ENCODE measurements at regions of chr14 and their contacts with region 1.

Region 1: DNA sequence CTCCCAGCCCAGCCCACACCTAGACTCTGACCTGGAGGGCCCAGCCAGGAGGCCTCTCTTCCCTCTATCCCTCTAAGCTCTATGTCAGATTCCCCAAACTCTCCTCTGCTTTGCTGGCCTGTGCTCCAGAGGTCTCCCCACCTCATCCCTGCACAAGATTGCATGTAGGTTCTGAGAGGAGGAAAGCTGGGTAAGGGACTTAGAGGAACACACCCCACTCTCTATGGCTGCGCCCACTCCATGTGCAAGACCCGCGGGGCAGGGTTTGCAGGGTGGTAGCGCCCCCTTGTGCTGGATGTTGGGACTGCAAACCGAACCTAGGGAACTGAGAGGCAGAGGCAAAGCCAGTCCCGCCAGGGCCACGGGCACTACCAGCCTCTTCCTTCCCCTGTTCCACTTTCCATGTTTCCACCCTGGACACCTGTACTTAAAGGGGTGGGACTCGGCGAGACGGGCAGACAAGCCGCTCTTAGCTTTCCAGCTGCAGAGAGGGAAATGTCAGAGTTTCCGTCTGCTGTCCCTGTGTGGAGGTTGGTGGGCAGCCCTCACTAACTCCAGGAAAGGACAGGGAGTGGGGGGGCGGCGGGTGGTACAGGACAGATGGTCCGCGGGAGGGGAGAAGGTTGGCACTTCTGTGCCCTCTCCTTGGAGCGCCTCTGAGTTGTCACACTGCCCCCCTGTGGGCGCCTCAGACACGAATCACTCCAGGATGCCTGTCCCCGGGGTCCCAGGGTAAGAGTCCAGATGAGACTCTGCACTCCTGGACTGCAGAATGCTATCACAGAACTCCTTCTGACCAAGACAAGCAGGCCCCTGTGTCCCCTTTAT is 16.8 kb downstream of the MMP14 start:
- DNase-seq: peak; percentile 81 to 86 (median 83)
- H3K4me3 ChIP-seq: peak overlapping the region; percentile 72 to 77
- H3K4me3 Mint-ChIP-seq: peak overlapping the region; percentile 84 to 89 (median 86)
- H3K27ac ChIP-seq: peak overlapping the region; percentile 34
- H3K27ac Mint-ChIP-seq: peak overlapping the region; percentile 52 to 83 (median 75)
- H3K4me1 ChIP-seq: peaks cover 13% of the 10 kb centered on the region
- H3K4me1 Mint-ChIP-seq: peaks cover 6 to 20% (median 13%) of the 10 kb centered on the region in 4 donors
- H3K27me3 ChIP-seq: no peaks in the 10 kb centered on the region
- H3K27me3 Mint-ChIP-seq: peaks cover 5 to 9% of the 10 kb centered on the region in 2 donors

Region 2: GRCh38 chr14:21840765-21841164 is 1012.4 kb before region 1 on chr14:
- CTCF ChIA-PET with region 1: interaction called, 6 read pairs
- POLR2A ChIA-PET with region 1: no interaction called
- intact Hi-C with region 1: loop called (anchors 1 kb)
- DNase-seq: peak in 4 of 5 donors; percentile 17 to 39 (median 28)
- H3K4me3 ChIP-seq: no peak overlapping the region
- H3K4me3 Mint-ChIP-seq: peak overlapping the region; percentile 49 to 79 (median 69)
- H3K27ac ChIP-seq: no peak overlapping the region
- H3K27ac Mint-ChIP-seq: peak overlapping the region in 6 of 7 donors; percentile 39 to 96 (median 62)
- H3K4me1 ChIP-seq: peaks cover 3% of the 10 kb centered on the region
- H3K4me1 Mint-ChIP-seq: peaks cover 0 to 11% (median 2%) of the 10 kb centered on the region in 4 donors
- H3K27me3 ChIP-seq: no peaks in the 10 kb centered on the region
- H3K27me3 Mint-ChIP-seq: peaks cover 16 to 17% of the 10 kb centered on the region in 2 donors

Region 3: DNA sequence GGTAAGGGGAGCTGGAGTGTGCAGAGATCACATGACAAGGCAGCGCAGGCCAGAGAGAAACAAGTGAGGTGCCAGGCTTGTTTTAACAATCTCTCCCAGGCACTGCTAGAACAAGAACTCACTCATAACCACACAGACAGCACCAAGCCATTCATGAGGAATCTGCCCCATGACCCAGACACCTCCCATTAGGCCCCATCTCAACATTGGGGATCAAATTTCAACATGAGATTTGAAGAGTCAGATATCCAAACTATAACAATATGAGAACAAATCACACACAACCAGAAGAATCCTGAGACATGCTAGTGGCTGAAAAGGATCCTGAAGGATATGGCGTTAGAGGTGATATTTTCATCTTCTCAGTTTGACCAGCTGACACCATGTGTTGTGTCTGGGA is 230.9 kb before region 1 on chr14:
- CTCF ChIA-PET with region 1: no interaction called
- POLR2A ChIA-PET with region 1: no interaction called
- intact Hi-C with region 1: no loop called
- DNase-seq: no peak
- H3K4me3 ChIP-seq: no peak overlapping the region
- H3K4me3 Mint-ChIP-seq: no peak overlapping the region
- H3K27ac ChIP-seq: no peak overlapping the region
- H3K27ac Mint-ChIP-seq: no peak overlapping the region
- H3K4me1 ChIP-seq: no peaks in the 10 kb centered on the region
- H3K4me1 Mint-ChIP-seq: no peaks in the 10 kb centered on the region
- H3K27me3 ChIP-seq: no peaks in the 10 kb centered on the region
- H3K27me3 Mint-ChIP-seq: peaks cover 3 to 8% of the 10 kb centered on the region in 2 donors

Region 4: DNA sequence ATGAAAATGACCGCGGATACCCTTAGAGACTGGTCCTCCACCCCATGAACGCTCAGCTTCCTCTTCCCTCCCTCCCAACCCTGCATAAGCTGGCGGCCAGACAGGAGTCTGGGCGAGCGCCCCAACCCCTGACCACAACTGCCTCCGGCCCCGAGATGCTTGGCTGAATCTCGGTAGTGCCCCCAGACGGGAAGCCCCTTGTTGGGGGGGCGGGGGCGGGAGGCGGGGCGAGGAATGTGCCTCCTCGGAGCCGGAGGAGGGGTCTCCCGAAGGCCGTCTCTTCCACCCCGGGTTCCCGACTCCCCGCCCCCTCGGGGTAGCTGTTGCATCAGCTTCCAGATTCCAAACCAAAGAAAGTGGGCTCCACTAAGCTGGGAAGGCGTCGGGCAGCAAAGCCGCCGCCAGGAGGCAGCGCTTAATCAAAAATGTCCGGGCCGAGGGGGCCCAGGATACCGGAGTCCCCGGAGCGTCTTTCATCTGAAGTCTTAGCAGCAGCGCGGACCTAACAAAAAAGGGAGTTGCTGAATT is 30.5 kb before region 1 on chr14:
- CTCF ChIA-PET with region 1: interaction called, 403 read pairs
- POLR2A ChIA-PET with region 1: interaction called, 15 read pairs
- intact Hi-C with region 1: loop called (anchors 1 kb)
- DNase-seq: peak; percentile 63 to 70 (median 66)
- H3K4me3 ChIP-seq: peak overlapping the region in 1 of 2 donors; percentile 27
- H3K4me3 Mint-ChIP-seq: peak overlapping the region; percentile 20 to 77 (median 66)
- H3K27ac ChIP-seq: no peak overlapping the region
- H3K27ac Mint-ChIP-seq: peak overlapping the region in 2 of 7 donors; percentile 19 to 43
- H3K4me1 ChIP-seq: peaks cover 7% of the 10 kb centered on the region
- H3K4me1 Mint-ChIP-seq: peaks cover 6 to 22% (median 12%) of the 10 kb centered on the region in 4 donors
- H3K27me3 ChIP-seq: no peaks in the 10 kb centered on the region
- H3K27me3 Mint-ChIP-seq: peaks cover 6 to 16% of the 10 kb centered on the region in 2 donors

Region 5: DNA sequence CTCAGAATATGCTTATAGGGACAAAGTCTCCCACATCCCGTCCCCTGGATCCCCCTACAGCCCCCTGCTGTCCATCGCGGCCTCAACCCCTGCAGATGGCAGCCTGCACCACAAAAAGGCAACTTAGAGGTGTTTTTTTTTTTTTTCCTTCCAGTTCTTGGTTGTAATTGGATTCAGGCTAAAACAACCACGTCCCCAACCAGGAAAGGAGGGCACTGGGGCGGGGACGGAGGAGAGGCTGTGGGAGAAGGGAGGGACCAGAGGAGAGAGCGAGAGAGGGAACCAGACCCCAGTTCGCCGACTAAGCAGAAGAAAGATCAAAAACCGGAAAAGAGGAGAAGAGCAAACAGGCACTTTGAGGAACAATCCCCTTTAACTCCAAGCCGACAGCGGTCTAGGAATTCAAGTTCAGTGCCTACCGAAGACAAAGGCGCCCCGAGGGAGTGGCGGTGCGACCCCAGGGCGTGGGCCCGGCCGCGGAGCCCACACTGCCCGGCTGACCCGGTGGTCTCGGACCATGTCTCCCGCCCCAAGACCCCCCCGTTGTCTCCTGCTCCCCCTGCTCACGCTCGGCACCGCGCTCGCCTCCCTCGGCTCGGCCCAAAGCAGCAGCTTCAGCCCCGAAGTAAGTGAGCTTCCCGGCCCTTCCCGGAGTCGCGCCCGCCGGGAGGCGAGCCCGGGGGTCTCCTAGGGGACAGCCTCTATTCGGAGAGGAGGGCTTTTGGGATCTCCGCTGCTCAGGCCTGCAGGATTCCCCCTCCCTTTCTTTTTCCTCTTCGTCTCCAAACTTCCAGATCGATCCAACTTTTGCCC is 16.6 kb before region 1 on chr14 and contains the start of gene MMP14:
- CTCF ChIA-PET with region 1: interaction called, 403 read pairs
- POLR2A ChIA-PET with region 1: interaction called, 3 read pairs
- intact Hi-C with region 1: no loop called
- DNase-seq: no peak
- H3K4me3 ChIP-seq: no peak within 1 kb of the TSS
- H3K4me3 Mint-ChIP-seq: peak within 1 kb of the TSS; percentile 74 to 86 (median 80)
- H3K27ac ChIP-seq: no peak within 1 kb of the TSS
- H3K27ac Mint-ChIP-seq: peak within 1 kb of the TSS in 4 of 7 donors; percentile 71 to 92 (median 78)
- H3K4me1 ChIP-seq: peaks cover 11% of the 10 kb centered on the region
- H3K4me1 Mint-ChIP-seq: peaks cover 4 to 18% (median 12%) of the 10 kb centered on the region in 4 donors
- H3K27me3 ChIP-seq: peaks cover 13% of the 10 kb centered on the region
- H3K27me3 Mint-ChIP-seq: peaks cover 8 to 22% of the 10 kb centered on the region in 2 donors
- total RNA-seq, gene MMP14: 3.0 to 3.8 TPM

Region 6: GRCh38 chr14:22872033-22872832 is 19.1 kb after region 1 on chr14:
- CTCF ChIA-PET with region 1: interaction called, 72 read pairs
- POLR2A ChIA-PET with region 1: interaction called, 22 read pairs
- intact Hi-C with region 1: loop called (anchors 1 kb)
- DNase-seq: peak; percentile 66 to 78 (median 73)
- H3K4me3 ChIP-seq: peak overlapping the region; percentile 24 to 55
- H3K4me3 Mint-ChIP-seq: peak overlapping the region; percentile 88 to 98 (median 97)
- H3K27ac ChIP-seq: peak overlapping the region; percentile 79
- H3K27ac Mint-ChIP-seq: peak overlapping the region; percentile 72 to 100 (median 89)
- H3K4me1 ChIP-seq: peaks cover 48% of the 10 kb centered on the region
- H3K4me1 Mint-ChIP-seq: peaks cover 17 to 46% (median 33%) of the 10 kb centered on the region in 4 donors
- H3K27me3 ChIP-seq: no peaks in the 10 kb centered on the region
- H3K27me3 Mint-ChIP-seq: no peaks in the 10 kb centered on the region

Region 7: GRCh38 chr14:22900081-22900799 is 47.1 kb after region 1 on chr14:
- CTCF ChIA-PET with region 1: interaction called, 58 read pairs
- POLR2A ChIA-PET with region 1: no interaction called
- intact Hi-C with region 1: loop called (anchors 1 kb)
- DNase-seq: peak; percentile 66 to 72 (median 67)
- H3K4me3 ChIP-seq: no peak overlapping the region
- H3K4me3 Mint-ChIP-seq: no peak overlapping the region
- H3K27ac ChIP-seq: no peak overlapping the region
- H3K27ac Mint-ChIP-seq: peak overlapping the region; percentile 12 to 65 (median 54)
- H3K4me1 ChIP-seq: peaks cover 4% of the 10 kb centered on the region
- H3K4me1 Mint-ChIP-seq: peaks cover 5 to 15% (median 5%) of the 10 kb centered on the region in 4 donors
- H3K27me3 ChIP-seq: no peaks in the 10 kb centered on the region
- H3K27me3 Mint-ChIP-seq: no peaks in the 10 kb centered on the region

Region 8: GRCh38 chr14:23613242-23614070 is 760.3 kb after region 1 on chr14:
- CTCF ChIA-PET with region 1: no interaction called
- POLR2A ChIA-PET with region 1: no interaction called
- intact Hi-C with region 1: no loop called
- DNase-seq: no peak
- H3K4me3 ChIP-seq: no peak overlapping the region
- H3K4me3 Mint-ChIP-seq: no peak overlapping the region
- H3K27ac ChIP-seq: no peak overlapping the region
- H3K27ac Mint-ChIP-seq: peak overlapping the region in 1 of 7 donors; percentile 82
- H3K4me1 ChIP-seq: peaks cover 29% of the 10 kb centered on the region
- H3K4me1 Mint-ChIP-seq: peaks cover 20 to 40% (median 27%) of the 10 kb centered on the region in 4 donors
- H3K27me3 ChIP-seq: no peaks in the 10 kb centered on the region
- H3K27me3 Mint-ChIP-seq: peaks cover 4 to 5% of the 10 kb centered on the region in 2 donors

Measured in CD4-positive, alpha-beta memory T cell (primary cell).